ENCODE measurements at regions of chr17 and their contacts with region 1.

Region 1: GRCh38 chr17:40598663-40599467 is 33.6 kb upstream of the CCR7 start:
- DNase-seq: peak; percentile 70
- ATAC-seq: peak; percentile 75
- H3K4me3 Mint-ChIP-seq: peak overlapping the region; percentile 59
- H3K27ac Mint-ChIP-seq: peak overlapping the region; percentile 92
- H3K4me1 Mint-ChIP-seq: peaks cover 95% of the 10 kb centered on the region
- H3K27me3 Mint-ChIP-seq: no peaks in the 10 kb centered on the region
- CTCF ChIP-seq: no peak

Region 2: DNA sequence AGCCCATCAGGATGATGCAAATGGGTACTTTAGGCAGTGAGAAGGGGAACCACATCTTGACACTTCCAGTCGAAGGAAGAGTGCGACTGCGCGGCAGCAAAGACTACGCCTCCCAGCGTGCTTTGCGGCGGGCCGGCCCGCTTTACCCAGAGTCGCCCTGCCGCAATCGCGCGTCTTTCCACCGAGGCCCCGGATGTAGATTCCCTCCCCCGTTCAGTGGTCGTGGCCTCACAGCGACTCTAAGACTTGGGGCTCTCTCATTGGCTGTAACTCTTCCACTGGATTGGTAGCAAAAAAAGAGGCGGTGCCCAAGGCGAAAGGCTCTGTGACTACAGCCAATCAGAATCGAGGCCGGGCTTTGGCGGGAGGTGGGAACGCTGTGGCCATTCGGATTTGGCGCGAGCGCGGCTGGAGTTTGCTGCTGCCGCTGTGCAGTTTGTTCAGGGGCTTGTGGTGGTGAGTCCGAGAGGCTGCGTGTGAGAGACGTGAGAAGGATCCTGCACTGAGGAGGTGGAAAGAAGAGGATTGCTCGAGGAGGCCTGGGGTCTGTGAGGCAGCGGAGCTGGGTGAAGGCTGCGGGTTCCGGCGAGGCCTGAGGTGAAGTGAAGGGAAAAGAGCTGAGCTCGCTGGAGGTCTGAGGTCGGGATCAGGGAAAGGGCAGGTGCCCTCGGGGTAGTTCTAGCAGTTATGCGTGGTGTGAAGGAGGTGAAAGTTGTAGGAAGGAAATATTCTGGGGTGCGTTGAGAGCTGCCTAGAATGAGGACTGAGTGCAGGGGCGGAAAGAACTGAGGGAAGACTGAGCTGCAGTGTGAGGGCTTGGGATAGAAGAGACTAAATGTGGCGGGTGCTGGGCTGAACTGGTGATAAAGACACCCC is 311.1 kb before region 1 on chr17 and contains the start of gene CDC6:
- CTCF ChIA-PET with region 1: no interaction called
- POLR2A ChIA-PET with region 1: no interaction called
- intact Hi-C with region 1: loop called (anchors 1 kb)
- DNase-seq: peak; percentile 93
- ATAC-seq: peak; percentile 95
- H3K4me3 Mint-ChIP-seq: peak within 1 kb of the TSS; percentile 97
- H3K27ac Mint-ChIP-seq: peak within 1 kb of the TSS; percentile 87
- H3K4me1 Mint-ChIP-seq: peaks cover 18% of the 10 kb centered on the region
- H3K27me3 Mint-ChIP-seq: no peaks in the 10 kb centered on the region
- CTCF ChIP-seq: no peak
- total RNA-seq, gene CDC6: 9.2 and 9.7 TPM in 2 replicates

Region 3: GRCh38 chr17:40358323-40359038 is 240.4 kb before region 1 on chr17:
- CTCF ChIA-PET with region 1: no interaction called
- POLR2A ChIA-PET with region 1: no interaction called
- intact Hi-C with region 1: no loop called
- DNase-seq: peak; percentile 82
- ATAC-seq: peak; percentile 68
- H3K4me3 Mint-ChIP-seq: peak overlapping the region; percentile 50
- H3K27ac Mint-ChIP-seq: peak overlapping the region; percentile 24
- H3K4me1 Mint-ChIP-seq: peaks cover 23% of the 10 kb centered on the region
- H3K27me3 Mint-ChIP-seq: peaks cover 14% of the 10 kb centered on the region
- CTCF ChIP-seq: peak; percentile 97

Region 4: DNA sequence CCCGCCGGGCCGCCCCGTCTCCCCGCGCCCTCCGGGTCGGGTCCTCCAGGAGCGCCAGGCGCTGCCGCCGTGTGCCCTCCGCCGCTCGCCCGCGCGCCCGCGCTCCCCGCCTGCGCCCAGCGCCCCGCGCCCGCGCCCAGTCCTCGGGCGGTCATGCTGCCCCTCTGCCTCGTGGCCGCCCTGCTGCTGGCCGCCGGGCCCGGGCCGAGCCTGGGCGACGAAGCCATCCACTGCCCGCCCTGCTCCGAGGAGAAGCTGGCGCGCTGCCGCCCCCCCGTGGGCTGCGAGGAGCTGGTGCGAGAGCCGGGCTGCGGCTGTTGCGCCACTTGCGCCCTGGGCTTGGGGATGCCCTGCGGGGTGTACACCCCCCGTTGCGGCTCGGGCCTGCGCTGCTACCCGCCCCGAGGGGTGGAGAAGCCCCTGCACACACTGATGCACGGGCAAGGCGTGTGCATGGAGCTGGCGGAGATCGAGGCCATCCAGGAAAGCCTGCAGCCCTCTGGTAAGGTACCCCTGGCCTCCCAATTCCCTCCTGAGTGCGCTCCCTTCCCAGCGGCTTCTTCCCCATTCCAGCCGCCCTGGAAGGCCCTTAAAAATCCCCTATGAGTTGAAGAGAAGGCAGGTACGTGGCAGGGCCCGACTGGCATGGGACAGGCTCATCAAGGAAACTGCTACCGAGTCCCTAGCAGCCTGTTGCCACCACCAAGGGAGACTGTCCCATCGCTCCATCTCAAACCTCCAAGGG is 155.1 kb before region 1 on chr17:
- CTCF ChIA-PET with region 1: no interaction called
- POLR2A ChIA-PET with region 1: no interaction called
- intact Hi-C with region 1: no loop called
- DNase-seq: peak; percentile 72
- ATAC-seq: peak; percentile 83
- H3K4me3 Mint-ChIP-seq: peak overlapping the region; percentile 81
- H3K27ac Mint-ChIP-seq: peak overlapping the region; percentile 79
- H3K4me1 Mint-ChIP-seq: peaks cover 37% of the 10 kb centered on the region
- H3K27me3 Mint-ChIP-seq: no peaks in the 10 kb centered on the region
- CTCF ChIP-seq: no peak

Region 5: DNA sequence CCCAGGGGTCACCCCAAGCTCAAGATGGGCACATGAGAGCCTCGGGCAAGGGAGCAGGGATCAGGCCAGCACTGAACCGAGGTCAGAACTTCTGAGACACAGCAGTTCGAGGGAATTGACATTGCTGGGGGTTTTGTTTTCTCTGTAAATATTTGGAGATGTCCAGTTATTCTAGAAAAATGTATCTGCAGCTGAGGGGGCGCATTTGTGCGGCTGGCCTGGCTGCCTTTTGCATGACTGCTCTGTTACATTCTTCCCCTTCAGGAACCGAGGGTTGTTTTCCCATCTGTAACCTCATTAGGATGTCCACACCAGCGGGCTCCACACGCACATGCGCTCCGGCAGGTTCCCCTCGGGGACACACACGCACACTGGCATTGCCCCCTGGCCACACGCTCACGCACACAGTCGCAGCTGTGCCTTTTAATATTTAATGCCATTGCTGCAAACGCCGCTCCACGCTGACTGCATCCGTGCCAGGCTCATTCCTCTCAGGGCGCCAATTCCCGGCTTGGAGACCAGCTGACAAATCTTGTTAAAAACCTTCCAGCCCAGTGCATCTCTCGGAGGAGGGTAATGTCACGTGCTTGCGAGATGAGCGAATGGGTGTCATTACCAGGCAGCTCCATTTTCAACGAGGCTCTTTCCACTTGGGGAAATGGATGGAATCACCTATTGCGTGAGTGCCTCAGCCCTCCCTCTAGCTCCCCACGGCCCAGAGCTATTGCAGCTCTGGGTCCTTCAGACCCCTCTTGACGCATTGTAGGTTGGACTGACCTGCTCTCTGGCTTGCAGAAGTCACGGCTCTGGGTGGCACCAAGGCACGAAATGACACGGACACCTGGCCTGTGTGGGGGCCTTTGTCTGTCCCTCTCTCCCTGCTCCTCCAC is 46.7 kb before region 1 on chr17:
- CTCF ChIA-PET with region 1: no interaction called
- POLR2A ChIA-PET with region 1: interaction called, 39 read pairs
- intact Hi-C with region 1: no loop called
- DNase-seq: peak; percentile 32
- ATAC-seq: peak; percentile 3
- H3K4me3 Mint-ChIP-seq: peak overlapping the region; percentile 36
- H3K27ac Mint-ChIP-seq: peak overlapping the region; percentile 99
- H3K4me1 Mint-ChIP-seq: peaks cover 100% of the 10 kb centered on the region
- H3K27me3 Mint-ChIP-seq: no peaks in the 10 kb centered on the region
- CTCF ChIP-seq: no peak

Region 6: DNA sequence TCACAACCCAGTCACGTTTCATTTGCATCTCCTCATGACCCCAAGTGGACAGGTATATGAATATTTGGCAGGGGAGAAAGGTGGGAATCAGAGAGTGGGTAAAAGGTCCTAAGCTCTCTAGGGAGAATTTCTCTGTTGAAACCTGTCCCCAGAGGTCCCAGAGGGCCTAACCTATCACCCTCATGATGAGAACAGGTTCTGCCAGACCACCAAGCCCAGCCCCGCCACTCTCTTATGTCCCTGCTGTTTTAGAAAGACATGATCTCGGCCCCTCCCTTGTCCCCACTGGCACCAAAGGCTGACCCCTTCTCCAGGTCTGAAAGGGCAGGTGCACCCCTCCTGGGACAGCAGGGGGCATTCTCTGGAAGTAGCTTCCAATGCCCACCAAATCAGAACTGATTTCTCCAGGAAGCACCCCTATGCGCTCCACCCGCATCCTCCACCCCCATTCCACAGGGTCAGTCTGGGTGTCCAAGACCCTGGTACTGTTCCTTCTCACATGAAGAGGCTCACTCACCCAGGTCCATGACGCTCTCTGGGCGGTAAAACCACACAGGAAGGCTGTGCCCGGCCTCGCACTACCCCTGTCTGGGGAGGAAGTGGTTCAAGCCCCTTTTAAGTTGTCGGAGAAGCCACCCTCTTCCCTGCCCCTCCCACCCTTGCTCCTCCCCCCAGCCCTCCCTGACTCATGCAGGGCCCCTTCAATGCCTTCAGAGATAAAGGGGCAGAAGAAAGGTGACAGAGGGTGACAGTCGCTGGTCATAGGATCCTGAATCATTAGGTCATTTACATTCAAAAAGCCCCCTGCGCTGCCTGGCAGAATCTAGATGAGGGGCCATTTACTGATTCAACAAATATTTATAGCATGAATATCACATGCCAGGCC is 33.7 kb before region 1 on chr17 and contains the start of gene CCR7:
- CTCF ChIA-PET with region 1: interaction called, 15 read pairs
- POLR2A ChIA-PET with region 1: interaction called, 381 read pairs
- intact Hi-C with region 1: loop called (anchors 1 kb)
- DNase-seq: peak; percentile 78
- ATAC-seq: peak; percentile 66
- H3K4me3 Mint-ChIP-seq: peak within 1 kb of the TSS; percentile 89
- H3K27ac Mint-ChIP-seq: peak within 1 kb of the TSS; percentile 99
- H3K4me1 Mint-ChIP-seq: peaks cover 74% of the 10 kb centered on the region
- H3K27me3 Mint-ChIP-seq: no peaks in the 10 kb centered on the region
- CTCF ChIP-seq: no peak
- total RNA-seq, gene CCR7: 572 and 573 TPM in 2 replicates

Region 7: GRCh38 chr17:40582328-40582901 is 16.4 kb before region 1 on chr17:
- CTCF ChIA-PET with region 1: interaction called, 4 read pairs
- POLR2A ChIA-PET with region 1: interaction called, 49 read pairs
- intact Hi-C with region 1: loop called (anchors 1 kb)
- DNase-seq: no peak
- ATAC-seq: peak; percentile 55
- H3K4me3 Mint-ChIP-seq: peak overlapping the region; percentile 54
- H3K27ac Mint-ChIP-seq: peak overlapping the region; percentile 87
- H3K4me1 Mint-ChIP-seq: peaks cover 93% of the 10 kb centered on the region
- H3K27me3 Mint-ChIP-seq: no peaks in the 10 kb centered on the region
- CTCF ChIP-seq: no peak

Region 8: GRCh38 chr17:40622509-40622928 is 23.7 kb after region 1 on chr17:
- CTCF ChIA-PET with region 1: interaction called, 3 read pairs
- POLR2A ChIA-PET with region 1: interaction called, 180 read pairs
- intact Hi-C with region 1: no loop called
- DNase-seq: no peak
- ATAC-seq: no peak
- H3K4me3 Mint-ChIP-seq: peak overlapping the region; percentile 53
- H3K27ac Mint-ChIP-seq: peak overlapping the region; percentile 67
- H3K4me1 Mint-ChIP-seq: peaks cover 71% of the 10 kb centered on the region
- H3K27me3 Mint-ChIP-seq: no peaks in the 10 kb centered on the region
- CTCF ChIP-seq: no peak

Region 9: DNA sequence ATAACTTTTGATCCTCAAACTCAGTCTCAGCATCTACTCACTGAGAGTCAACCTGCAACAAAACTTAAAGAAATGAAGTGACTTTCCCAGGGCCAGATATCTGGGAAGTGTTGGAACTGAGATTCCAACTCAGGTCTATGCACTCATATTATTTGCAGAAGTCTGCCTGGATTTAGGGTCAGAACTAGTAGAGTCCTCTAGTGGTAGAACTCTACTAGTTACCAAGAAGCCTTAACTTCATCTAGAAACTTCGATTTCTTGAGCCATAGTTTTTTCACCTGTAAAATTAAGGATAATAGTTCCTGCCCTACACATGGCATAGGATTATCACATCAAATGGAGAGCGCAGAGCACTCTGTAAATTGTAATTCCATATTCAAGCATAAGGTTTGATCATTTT is 128.1 kb after region 1 on chr17:
- CTCF ChIA-PET with region 1: no interaction called
- POLR2A ChIA-PET with region 1: no interaction called
- intact Hi-C with region 1: loop called (anchors 1 kb)
- DNase-seq: no peak
- ATAC-seq: no peak
- H3K4me3 Mint-ChIP-seq: peak overlapping the region; percentile 12
- H3K27ac Mint-ChIP-seq: peak overlapping the region; percentile 74
- H3K4me1 Mint-ChIP-seq: peaks cover 26% of the 10 kb centered on the region
- H3K27me3 Mint-ChIP-seq: no peaks in the 10 kb centered on the region
- CTCF ChIP-seq: no peak

Region 10: GRCh38 chr17:40980596-40980995 is 381.7 kb after region 1 on chr17:
- CTCF ChIA-PET with region 1: no interaction called
- POLR2A ChIA-PET with region 1: no interaction called
- intact Hi-C with region 1: no loop called
- DNase-seq: no peak
- ATAC-seq: no peak
- H3K4me3 Mint-ChIP-seq: no peak overlapping the region
- H3K27ac Mint-ChIP-seq: no peak overlapping the region
- H3K4me1 Mint-ChIP-seq: no peaks in the 10 kb centered on the region
- H3K27me3 Mint-ChIP-seq: peaks cover 26% of the 10 kb centered on the region
- CTCF ChIP-seq: no peak